ENCODE measurements at regions of chr2 and their contacts with region 1.

Region 1: GRCh38 chr2:120109186-120110061 is 96.5 kb downstream of the EPB41L5 start:
- DNase-seq: peak; percentile 31
- H3K4me3 ChIP-seq: no peak overlapping the region
- CTCF ChIP-seq: peak; percentile 25

Region 2: GRCh38 chr2:120167272-120167671 is 57.8 kb after region 1 on chr2:
- in situ Hi-C with region 1: loop called (anchors 5 kb)
- DNase-seq: no peak
- H3K4me3 ChIP-seq: no peak overlapping the region
- CTCF ChIP-seq: no peak

Measured in astrocyte of the cerebellum (primary cell).